ENCODE measurements at regions of chr15 and their contacts with region 1.

Region 1: DNA sequence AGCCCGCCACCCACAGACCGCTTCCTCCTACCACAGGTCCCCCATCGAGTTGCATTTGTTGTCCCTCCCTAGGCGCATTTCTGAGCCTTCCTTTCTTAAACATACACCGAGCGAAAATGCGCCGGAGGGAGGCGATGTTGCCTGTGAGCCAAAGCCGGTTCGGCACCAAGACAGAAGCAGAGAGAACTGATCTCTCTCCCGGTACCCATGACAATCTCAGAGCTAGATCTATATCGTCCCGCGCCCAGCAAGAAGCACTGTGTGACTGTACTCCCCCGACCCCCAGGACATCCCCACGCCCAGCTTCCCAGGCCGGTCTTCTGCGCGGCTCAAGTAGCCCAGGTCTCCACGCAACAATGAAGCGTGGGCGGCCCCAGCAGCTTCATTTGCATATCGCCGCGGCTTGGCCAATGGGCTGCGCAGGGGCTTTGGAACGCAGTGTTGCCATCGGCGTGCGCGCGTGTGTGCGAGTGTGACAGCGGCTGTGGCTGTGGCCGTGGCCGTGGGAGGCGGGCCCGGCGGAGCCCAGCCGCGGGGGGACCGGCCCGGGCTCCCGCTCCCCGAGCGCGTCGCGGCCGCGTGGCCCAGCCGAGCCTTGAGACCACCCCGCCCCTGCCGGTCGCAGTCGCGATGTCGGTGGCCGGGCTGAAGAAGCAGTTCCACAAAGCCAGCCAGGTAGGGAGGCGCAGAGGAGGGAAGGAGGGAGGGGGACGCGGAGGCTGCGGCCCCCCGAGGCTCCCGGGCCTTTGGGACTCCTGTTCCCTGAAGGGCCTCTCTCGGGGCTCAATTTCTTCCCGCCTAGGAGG is at the start of gene SH3GL3:
- DNase-seq: peak; percentile 79
- ATAC-seq: peak; percentile 77
- H3K4me3 Mint-ChIP-seq: peak within 1 kb of the TSS; percentile 88
- H3K27ac Mint-ChIP-seq: 0 out of 2 replicates have a peak within 1 kb of the TSS, but pooled peaks have one; percentile 30
- H3K4me1 Mint-ChIP-seq: peaks cover 25% of the 10 kb centered on the region
- H3K27me3 Mint-ChIP-seq: peaks cover 21% of the 10 kb centered on the region
- CTCF ChIP-seq: no peak
- total RNA-seq, gene SH3GL3: 7.8 to 9.2 TPM (median 8.0 TPM) in 3 replicates

Region 2: GRCh38 chr15:83158401-83158800 is 288.7 kb before region 1 on chr15:
- CTCF ChIA-PET with region 1: no interaction called
- POLR2A ChIA-PET with region 1: no interaction called
- DNase-seq: no peak
- ATAC-seq: no peak
- H3K4me3 Mint-ChIP-seq: no peak overlapping the region
- H3K27ac Mint-ChIP-seq: no peak overlapping the region
- H3K4me1 Mint-ChIP-seq: peaks cover 6% of the 10 kb centered on the region
- H3K27me3 Mint-ChIP-seq: no peaks in the 10 kb centered on the region
- CTCF ChIP-seq: no peak

Region 3: DNA sequence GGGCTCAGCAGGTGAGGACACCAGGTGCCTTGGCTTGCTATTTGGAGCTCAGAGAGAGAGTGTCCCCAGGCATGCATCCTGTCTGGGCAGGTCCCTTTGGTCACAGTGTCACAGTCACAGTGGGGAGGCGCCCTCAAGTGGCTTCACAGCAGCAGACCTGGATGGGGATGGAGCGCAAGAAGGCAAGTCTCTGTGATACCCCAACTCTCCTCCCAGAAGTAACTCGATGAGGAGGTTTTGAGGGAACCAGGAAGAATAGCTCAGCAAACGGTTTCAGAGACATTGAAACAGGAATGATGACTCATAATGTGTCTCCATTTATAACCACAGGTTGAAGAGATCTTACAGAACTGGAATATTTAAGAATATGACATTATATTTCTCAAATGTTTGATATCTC is 66.4 kb before region 1 on chr15:
- CTCF ChIA-PET with region 1: no interaction called
- POLR2A ChIA-PET with region 1: no interaction called
- DNase-seq: peak; percentile 34
- ATAC-seq: peak; percentile 7; the same call in 1 of the 2 replicates
- H3K4me3 Mint-ChIP-seq: no peak overlapping the region
- H3K27ac Mint-ChIP-seq: no peak overlapping the region
- H3K4me1 Mint-ChIP-seq: peaks cover 28% of the 10 kb centered on the region
- H3K27me3 Mint-ChIP-seq: peaks cover 37% of the 10 kb centered on the region
- CTCF ChIP-seq: no peak

Region 4: GRCh38 chr15:83422081-83422480 is 25.0 kb before region 1 on chr15:
- CTCF ChIA-PET with region 1: no interaction called
- POLR2A ChIA-PET with region 1: no interaction called
- DNase-seq: no peak
- ATAC-seq: no peak
- H3K4me3 Mint-ChIP-seq: no peak overlapping the region
- H3K27ac Mint-ChIP-seq: no peak overlapping the region
- H3K4me1 Mint-ChIP-seq: no peaks in the 10 kb centered on the region
- H3K27me3 Mint-ChIP-seq: peaks cover 4% of the 10 kb centered on the region; the same call in 1 of the 2 replicates
- CTCF ChIP-seq: no peak

Region 5: DNA sequence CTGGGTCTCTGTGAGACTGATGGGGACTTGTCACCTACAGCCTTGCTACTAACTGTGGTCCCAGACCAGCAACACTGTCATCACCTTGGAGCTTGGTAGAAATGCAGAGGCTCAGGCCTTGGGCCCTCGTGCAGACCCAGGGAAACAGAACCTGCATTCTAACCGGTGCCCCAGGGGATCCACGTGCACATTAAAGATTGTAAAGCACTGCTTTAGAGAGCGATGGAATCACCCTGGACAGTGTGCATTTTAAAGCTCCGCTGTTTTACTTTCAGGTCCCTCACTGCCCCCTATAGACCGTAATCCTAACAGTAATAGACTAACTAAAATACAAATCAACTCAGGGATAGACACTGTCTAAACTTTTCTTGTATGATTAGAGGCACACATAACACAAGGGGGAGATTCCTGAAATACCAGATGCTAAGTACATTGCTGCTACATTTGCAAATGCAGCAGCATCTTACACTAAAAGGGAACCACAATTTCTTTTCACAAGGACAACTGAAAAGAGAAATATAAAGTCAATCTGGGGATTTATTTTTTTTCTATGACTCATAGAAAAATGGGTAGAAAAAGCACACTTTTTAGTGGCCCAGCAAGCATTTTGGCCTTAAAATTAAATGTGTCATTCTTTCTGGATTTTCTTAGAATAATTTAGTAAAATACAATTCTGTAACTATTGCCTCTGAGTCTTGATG is 10.5 kb before region 1 on chr15:
- CTCF ChIA-PET with region 1: interaction called, 15 read pairs
- POLR2A ChIA-PET with region 1: no interaction called
- DNase-seq: no peak
- ATAC-seq: peak; percentile 88
- H3K4me3 Mint-ChIP-seq: no peak overlapping the region
- H3K27ac Mint-ChIP-seq: no peak overlapping the region
- H3K4me1 Mint-ChIP-seq: peaks cover 8% of the 10 kb centered on the region
- H3K27me3 Mint-ChIP-seq: no peaks in the 10 kb centered on the region
- CTCF ChIP-seq: peak; percentile 42

Region 6: DNA sequence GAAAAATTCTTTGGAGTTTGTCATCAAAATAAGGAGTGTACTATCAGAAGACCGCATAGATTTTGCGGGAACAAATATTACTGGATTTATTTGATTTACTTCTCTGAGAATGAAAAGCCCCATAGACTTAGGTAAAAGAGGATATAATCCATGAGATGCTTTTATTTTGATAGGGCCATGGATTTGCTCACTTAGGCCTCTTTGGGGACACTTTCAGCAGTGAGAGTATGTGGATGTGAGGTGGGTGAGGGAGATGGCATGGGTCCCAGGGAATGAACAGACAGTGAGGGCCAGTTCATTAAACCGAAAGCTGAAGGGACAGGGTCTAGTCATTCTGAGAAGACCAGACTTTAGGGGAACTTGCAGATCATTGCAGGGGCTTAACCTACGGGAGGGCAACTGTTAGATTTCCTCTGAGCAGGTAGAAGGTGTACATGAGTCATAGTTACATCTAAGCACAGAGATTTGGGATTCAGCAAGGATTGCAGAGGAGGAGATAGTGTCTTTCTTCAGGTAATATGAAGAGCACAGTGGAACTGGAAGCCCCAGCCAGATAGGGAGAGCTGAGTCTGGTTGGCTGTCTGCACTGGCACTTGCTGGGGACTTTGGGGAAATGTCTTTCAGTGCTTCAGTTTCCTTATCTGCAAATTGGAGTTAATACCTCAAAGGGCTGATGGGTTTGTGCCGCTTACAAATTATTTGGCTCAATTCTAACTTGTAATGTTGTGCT is 30.9 kb after region 1 on chr15:
- CTCF ChIA-PET with region 1: interaction called, 10 read pairs
- POLR2A ChIA-PET with region 1: interaction called, 3 read pairs
- DNase-seq: no peak
- ATAC-seq: no peak; the same call in 1 of the 2 replicates
- H3K4me3 Mint-ChIP-seq: no peak overlapping the region
- H3K27ac Mint-ChIP-seq: no peak overlapping the region
- H3K4me1 Mint-ChIP-seq: peaks cover 20% of the 10 kb centered on the region
- H3K27me3 Mint-ChIP-seq: no peaks in the 10 kb centered on the region
- CTCF ChIP-seq: no peak

Region 7: GRCh38 chr15:83545804-83546511 is 98.9 kb after region 1 on chr15:
- CTCF ChIA-PET with region 1: interaction called, 11 read pairs
- POLR2A ChIA-PET with region 1: interaction called, 3 read pairs
- DNase-seq: no peak
- ATAC-seq: peak; percentile 74
- H3K4me3 Mint-ChIP-seq: no peak overlapping the region
- H3K27ac Mint-ChIP-seq: 0 out of 2 replicates have a peak overlapping the region, but pooled peaks have one; percentile 36
- H3K4me1 Mint-ChIP-seq: peaks cover 51% of the 10 kb centered on the region
- H3K27me3 Mint-ChIP-seq: peaks cover 39% of the 10 kb centered on the region
- CTCF ChIP-seq: no peak

Region 8: DNA sequence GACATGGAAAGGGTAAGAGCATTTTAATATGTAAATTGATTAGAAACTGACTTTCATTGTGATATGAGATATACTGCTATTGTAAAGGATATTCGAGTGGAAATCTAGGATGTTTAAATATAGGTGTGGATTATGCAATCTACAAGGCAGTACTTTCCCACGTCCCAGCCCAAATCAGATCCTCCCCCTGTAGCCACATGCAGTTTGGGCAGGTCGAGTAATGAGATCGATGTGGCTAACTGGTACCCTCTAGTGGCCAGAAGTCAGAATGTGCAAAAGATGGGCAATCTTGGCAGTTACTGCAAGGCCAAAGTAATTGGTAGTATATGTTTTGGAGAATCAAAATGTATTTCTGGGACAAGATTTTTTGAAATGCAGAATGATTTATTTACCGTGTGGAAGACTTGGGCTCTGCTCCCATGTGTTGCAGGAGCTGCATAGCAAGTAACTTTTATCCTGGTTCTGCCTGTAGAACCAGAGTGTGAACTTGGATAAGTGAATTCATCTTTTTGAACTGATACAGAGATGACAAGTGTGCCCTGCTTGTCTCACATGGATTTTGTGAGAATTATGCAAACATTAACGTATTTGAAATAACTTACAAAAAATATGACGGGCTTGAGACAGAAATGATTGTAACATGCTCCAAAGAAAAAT is 112.3 kb after region 1 on chr15:
- CTCF ChIA-PET with region 1: interaction called, 83 read pairs
- POLR2A ChIA-PET with region 1: no interaction called
- DNase-seq: peak; percentile 72
- ATAC-seq: peak; percentile 90
- H3K4me3 Mint-ChIP-seq: no peak overlapping the region
- H3K27ac Mint-ChIP-seq: no peak overlapping the region
- H3K4me1 Mint-ChIP-seq: 0 out of 2 replicates have a peak, but pooled peaks cover 2% of the 10 kb centered on the region
- H3K27me3 Mint-ChIP-seq: no peaks in the 10 kb centered on the region
- CTCF ChIP-seq: peak; percentile 70

Region 9: GRCh38 chr15:83564975-83565532 is 117.9 kb after region 1 on chr15:
- CTCF ChIA-PET with region 1: interaction called, 83 read pairs
- POLR2A ChIA-PET with region 1: no interaction called
- DNase-seq: no peak
- ATAC-seq: no peak
- H3K4me3 Mint-ChIP-seq: no peak overlapping the region
- H3K27ac Mint-ChIP-seq: no peak overlapping the region
- H3K4me1 Mint-ChIP-seq: no peaks in the 10 kb centered on the region
- H3K27me3 Mint-ChIP-seq: no peaks in the 10 kb centered on the region
- CTCF ChIP-seq: no peak

Region 10: GRCh38 chr15:83571820-83572707 is 125.0 kb after region 1 on chr15:
- CTCF ChIA-PET with region 1: interaction called, 17 read pairs
- POLR2A ChIA-PET with region 1: no interaction called
- DNase-seq: no peak
- ATAC-seq: peak; percentile 79
- H3K4me3 Mint-ChIP-seq: no peak overlapping the region
- H3K27ac Mint-ChIP-seq: no peak overlapping the region
- H3K4me1 Mint-ChIP-seq: no peaks in the 10 kb centered on the region
- H3K27me3 Mint-ChIP-seq: no peaks in the 10 kb centered on the region
- CTCF ChIP-seq: peak; percentile 34; the same call in 1 of the 2 replicates

Region 11: GRCh38 chr15:83714931-83715628 is 268.0 kb after region 1 on chr15:
- CTCF ChIA-PET with region 1: no interaction called
- POLR2A ChIA-PET with region 1: no interaction called
- DNase-seq: no peak
- ATAC-seq: no peak
- H3K4me3 Mint-ChIP-seq: no peak overlapping the region
- H3K27ac Mint-ChIP-seq: no peak overlapping the region
- H3K4me1 Mint-ChIP-seq: no peaks in the 10 kb centered on the region
- H3K27me3 Mint-ChIP-seq: no peaks in the 10 kb centered on the region
- CTCF ChIP-seq: no peak

Measured in WTC11 (cell line).